Mammary epithelial cell (primary cell): ENCODE measurements at regions of chr3 and their contacts with region 1.

Region 1: GRCh38 chr3:168095611-168096209 is at the start of gene GOLIM4:
- DNase-seq: peak; percentile 99
- H3K4me3 ChIP-seq: peak within 1 kb of the TSS; percentile 75 to 94 (median 88)
- H3K27ac ChIP-seq: peak within 1 kb of the TSS; percentile 84
- H3K4me1 ChIP-seq: peaks cover 16% of the 10 kb centered on the region
- H3K27me3 ChIP-seq: no peaks in the 10 kb centered on the region
- CTCF ChIP-seq: no peak
- total RNA-seq, gene GOLIM4: 31.4 to 31.7 TPM

Region 2: DNA sequence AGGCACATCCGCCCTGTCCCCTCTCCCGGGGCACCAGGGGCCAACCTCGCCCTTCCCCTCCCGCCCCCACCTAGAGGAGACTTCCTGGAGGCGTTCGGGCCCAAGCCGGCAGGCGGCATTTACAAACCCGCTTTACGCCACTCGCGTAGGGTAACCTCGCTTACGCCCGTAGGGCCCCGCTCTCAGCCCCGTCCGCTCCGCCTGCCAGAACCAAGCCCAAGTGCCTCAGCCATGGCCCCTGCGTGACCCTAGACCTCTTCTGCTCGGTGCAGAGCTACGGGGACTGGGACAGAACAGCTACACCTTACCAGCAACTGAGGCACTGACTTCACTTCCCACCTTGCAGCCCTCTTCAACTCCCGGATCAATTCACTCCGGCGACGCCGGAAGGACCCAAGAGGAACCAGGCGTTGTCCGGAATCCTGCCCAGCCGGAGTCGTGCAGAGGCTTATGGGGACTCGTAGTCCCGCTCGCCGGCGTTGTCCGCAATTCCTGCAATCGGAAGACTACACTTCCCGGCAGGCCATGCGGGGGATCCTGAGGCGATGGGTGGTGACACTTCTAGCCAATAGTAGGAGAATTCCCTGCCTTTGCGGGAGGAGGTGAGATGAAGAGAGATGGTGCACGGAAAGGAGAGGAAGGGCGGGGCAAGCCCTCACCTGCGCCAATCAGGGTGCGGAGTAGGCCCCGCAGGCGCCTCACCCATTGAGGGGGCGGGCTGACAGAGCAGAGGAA is 361.0 kb before region 1 on chr3 and contains the start of gene PDCD10:
- CTCF ChIA-PET with region 1: no interaction called
- dilution Hi-C with region 1: no loop called
- in situ Hi-C with region 1: no loop called
- intact Hi-C with region 1: loop called (anchors 10 kb)
- DNase-seq: peak; percentile 99
- H3K4me3 ChIP-seq: peak within 1 kb of the TSS; percentile 84 to 97 (median 89)
- H3K27ac ChIP-seq: peak within 1 kb of the TSS; percentile 79
- H3K4me1 ChIP-seq: no peaks in the 10 kb centered on the region
- H3K27me3 ChIP-seq: no peaks in the 10 kb centered on the region
- CTCF ChIP-seq: no peak
- total RNA-seq, gene PDCD10: 70.8 to 76.1 TPM

Region 3: GRCh38 chr3:168047190-168047795 is 48.4 kb before region 1 on chr3:
- CTCF ChIA-PET with region 1: no interaction called
- dilution Hi-C with region 1: no loop called
- in situ Hi-C with region 1: no loop called
- intact Hi-C with region 1: loop called (anchors 1 kb)
- DNase-seq: peak; percentile 73
- H3K4me3 ChIP-seq: no peak overlapping the region
- H3K27ac ChIP-seq: no peak overlapping the region
- H3K4me1 ChIP-seq: no peaks in the 10 kb centered on the region
- H3K27me3 ChIP-seq: no peaks in the 10 kb centered on the region
- CTCF ChIP-seq: peak; percentile 83 to 85

Region 4: GRCh38 chr3:168061332-168061996 is 34.2 kb before region 1 on chr3:
- CTCF ChIA-PET with region 1: no interaction called
- dilution Hi-C with region 1: no loop called
- in situ Hi-C with region 1: no loop called
- intact Hi-C with region 1: no loop called
- DNase-seq: no peak
- H3K4me3 ChIP-seq: no peak overlapping the region
- H3K27ac ChIP-seq: no peak overlapping the region
- H3K4me1 ChIP-seq: no peaks in the 10 kb centered on the region
- H3K27me3 ChIP-seq: no peaks in the 10 kb centered on the region
- CTCF ChIP-seq: no peak

Region 5: GRCh38 chr3:168073842-168074635 is 21.7 kb before region 1 on chr3:
- CTCF ChIA-PET with region 1: no interaction called
- dilution Hi-C with region 1: no loop called
- in situ Hi-C with region 1: no loop called
- intact Hi-C with region 1: loop called (anchors 2 kb)
- DNase-seq: peak; percentile 26
- H3K4me3 ChIP-seq: no peak overlapping the region
- H3K27ac ChIP-seq: peak overlapping the region; percentile 98
- H3K4me1 ChIP-seq: peaks cover 32% of the 10 kb centered on the region
- H3K27me3 ChIP-seq: no peaks in the 10 kb centered on the region
- CTCF ChIP-seq: no peak

Region 6: GRCh38 chr3:168117853-168118313 is 22.2 kb after region 1 on chr3:
- CTCF ChIA-PET with region 1: no interaction called
- dilution Hi-C with region 1: no loop called
- in situ Hi-C with region 1: no loop called
- intact Hi-C with region 1: loop called (anchors 1 kb)
- DNase-seq: peak; percentile 57
- H3K4me3 ChIP-seq: no peak overlapping the region
- H3K27ac ChIP-seq: no peak overlapping the region
- H3K4me1 ChIP-seq: peaks cover 8% of the 10 kb centered on the region
- H3K27me3 ChIP-seq: no peaks in the 10 kb centered on the region
- CTCF ChIP-seq: no peak

Region 7: DNA sequence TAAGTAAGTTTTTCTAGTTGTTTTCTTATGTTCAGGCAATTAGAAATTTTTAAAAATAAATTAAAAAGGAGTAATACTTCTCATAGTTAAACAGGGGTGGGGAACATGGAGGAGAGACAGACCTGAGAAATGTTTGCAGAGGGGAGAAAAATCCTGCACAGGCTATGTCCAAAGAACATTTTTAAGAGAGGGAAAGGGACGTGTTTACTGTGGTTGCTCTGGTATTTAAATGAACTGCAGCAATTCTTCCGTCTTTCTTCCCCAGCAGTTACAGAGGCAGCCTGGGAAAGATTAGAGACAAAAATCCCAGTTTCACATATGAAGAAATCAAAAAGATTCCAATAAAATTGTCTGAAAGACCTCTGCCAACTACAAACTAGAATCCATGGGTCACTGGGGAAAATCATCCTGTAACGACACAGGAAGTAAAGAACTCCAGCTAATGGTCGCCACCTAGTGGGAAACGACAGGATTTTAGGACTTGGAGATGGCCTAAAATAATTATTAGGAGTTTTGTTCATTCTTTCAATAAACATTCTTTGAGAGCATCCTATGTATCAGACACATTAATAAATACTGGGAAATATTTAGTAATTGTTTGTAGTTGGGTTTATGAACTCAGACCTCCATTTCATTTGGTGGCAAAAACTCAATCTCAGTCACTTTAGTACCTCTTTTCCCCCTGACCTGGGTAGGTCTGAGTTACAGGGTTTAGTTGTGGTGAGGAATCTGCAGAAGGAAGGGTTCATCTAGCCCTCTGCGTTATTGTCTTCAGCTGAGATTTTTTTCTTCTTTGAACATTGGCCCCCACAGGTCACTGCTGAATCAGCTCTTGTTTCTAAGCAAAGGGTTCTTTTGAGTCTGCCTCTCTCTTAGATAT is 69.9 kb after region 1 on chr3:
- CTCF ChIA-PET with region 1: interaction called, 5 read pairs
- dilution Hi-C with region 1: no loop called
- in situ Hi-C with region 1: no loop called
- intact Hi-C with region 1: loop called (anchors 1 kb)
- DNase-seq: peak; percentile 53
- H3K4me3 ChIP-seq: no peak overlapping the region
- H3K27ac ChIP-seq: peak overlapping the region; percentile 42
- H3K4me1 ChIP-seq: peaks cover 7% of the 10 kb centered on the region
- H3K27me3 ChIP-seq: peaks cover 2% of the 10 kb centered on the region
- CTCF ChIP-seq: peak; percentile 73 to 77

Region 8: GRCh38 chr3:168604767-168605166 is 509.1 kb after region 1 on chr3:
- CTCF ChIA-PET with region 1: no interaction called
- dilution Hi-C with region 1: no loop called
- in situ Hi-C with region 1: no loop called
- intact Hi-C with region 1: no loop called
- DNase-seq: no peak
- H3K4me3 ChIP-seq: no peak overlapping the region
- H3K27ac ChIP-seq: no peak overlapping the region
- H3K4me1 ChIP-seq: no peaks in the 10 kb centered on the region
- H3K27me3 ChIP-seq: no peaks in the 10 kb centered on the region
- CTCF ChIP-seq: no peak